Dorsolateral prefrontal cortex (tissue), 120 donors: ENCODE measurements at regions of chr2 and their contacts with region 1.

Region 1: DNA sequence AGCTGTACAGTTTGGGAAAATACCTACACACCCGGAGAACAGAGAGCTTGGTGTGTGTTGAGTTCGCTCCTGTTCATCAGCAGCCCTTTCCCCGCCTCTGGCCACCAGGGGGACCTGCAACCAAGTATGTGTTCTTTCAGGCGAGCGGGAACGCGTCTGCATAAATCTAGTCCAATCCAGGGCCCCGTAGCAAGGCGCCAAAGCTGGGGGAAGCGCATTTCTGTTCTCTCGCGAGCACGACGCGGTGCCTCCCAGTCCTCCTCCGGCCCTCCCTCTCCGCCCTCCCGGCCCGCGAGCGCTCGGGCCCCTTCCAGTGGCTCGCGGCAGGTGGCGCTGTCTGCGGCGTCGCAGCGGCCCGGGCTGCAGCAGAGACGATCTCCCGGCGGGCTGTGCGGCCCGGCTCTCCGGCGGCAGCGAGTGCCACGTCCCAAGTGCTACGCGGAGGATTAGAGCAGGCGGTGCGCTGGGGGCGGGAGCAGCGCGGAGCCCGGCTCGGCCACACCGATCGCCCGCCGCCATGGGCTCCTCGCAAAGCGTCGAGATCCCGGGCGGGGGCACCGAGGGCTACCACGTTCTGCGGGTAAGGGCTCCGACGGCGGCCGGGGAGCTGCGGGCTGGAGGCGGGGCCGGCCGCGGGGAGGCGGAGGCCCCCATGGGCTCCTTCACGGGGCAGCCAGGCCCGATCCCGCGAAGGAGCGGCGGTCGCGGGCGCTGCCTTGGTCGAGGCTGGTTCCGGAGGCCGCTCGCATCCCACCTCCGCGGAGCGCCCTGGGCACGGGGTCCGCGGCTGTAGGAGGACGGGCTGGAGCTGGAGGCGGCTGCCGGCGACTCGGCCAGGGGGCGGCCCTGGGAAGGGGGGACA is at the start of gene GORASP2:
- DNase-seq: peak; percentile 95 to 100 (median 98)
- H3K4me3 ChIP-seq: peak within 1 kb of the TSS; percentile 59 to 99 (median 92)
- H3K27ac ChIP-seq: peak within 1 kb of the TSS; percentile 46 to 97 (median 88)
- H3K27me3 ChIP-seq: no peaks in the 10 kb centered on the region
- CTCF ChIP-seq: peak in 55 of 56 donors; percentile 87 to 100 (median 97)
- total RNA-seq, gene GORASP2: 28.3 to 69.0 (median 51.0) TPM

Region 2: DNA sequence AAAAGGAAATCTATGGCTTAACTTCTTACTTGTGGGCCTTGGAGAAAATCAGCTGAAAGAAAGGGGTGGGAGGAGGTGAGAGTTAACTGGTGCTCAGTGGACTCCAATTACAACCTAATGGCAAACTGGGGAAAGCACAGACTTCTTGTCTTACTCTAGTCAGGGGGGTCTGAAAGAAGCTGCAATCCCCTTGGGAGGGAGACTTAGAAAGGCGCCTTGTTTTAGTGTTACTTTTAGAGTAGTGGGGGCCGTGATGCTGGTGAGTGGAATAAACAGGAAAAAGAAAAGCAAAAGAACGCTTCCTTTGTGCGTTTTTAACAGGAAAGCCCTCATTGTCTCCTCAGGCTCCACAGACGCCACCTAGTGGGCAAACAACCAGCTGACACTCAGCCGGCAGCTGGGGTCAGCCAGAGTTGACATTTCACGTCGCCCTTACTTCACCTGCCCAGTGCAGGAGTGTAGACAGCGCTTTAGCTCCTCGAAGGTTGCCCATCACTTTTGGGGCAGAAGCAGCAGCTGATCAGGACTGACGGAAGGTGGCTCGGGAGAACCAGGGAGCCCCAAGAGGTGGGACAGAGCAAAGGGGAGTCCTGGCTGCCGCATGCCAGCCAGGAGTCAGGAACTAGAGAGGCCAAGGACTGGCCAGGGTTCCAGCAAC is 55.9 kb before region 1 on chr2:
- intact Hi-C with region 1: no loop called
- DNase-seq: peak in 9 of 10 donors; percentile 23 to 71 (median 55)
- H3K4me3 ChIP-seq: peak overlapping the region in 51 of 59 donors; percentile 7 to 60 (median 35)
- H3K27ac ChIP-seq: peak overlapping the region in 2 of 59 donors; percentile 44 to 48
- H3K27me3 ChIP-seq: peaks cover 0 to 4% (median 0%) of the 10 kb centered on the region in 45 donors
- CTCF ChIP-seq: peak; percentile 58 to 89 (median 82)

Region 3: DNA sequence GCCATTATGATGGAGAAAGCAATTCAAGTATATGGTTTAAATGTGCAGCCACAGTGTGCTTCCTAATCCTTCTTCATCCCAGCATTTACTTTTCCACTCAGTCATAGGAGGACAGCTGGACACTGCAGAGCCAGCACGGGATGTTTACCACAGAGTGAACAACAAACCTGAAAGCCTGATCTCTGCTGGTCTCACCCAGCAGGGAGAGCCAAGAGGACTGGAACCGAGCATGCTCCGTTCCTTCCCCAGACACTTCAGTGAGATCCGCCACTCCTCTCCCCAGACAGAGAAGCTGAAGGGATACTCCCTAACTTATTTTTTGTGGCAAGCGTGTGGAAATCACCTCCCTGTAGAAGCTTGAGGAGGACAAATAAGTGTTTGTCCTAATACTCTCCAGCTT is 23.2 kb before region 1 on chr2:
- intact Hi-C with region 1: no loop called
- DNase-seq: no peak
- H3K4me3 ChIP-seq: no peak overlapping the region
- H3K27ac ChIP-seq: no peak overlapping the region
- H3K27me3 ChIP-seq: no peaks in the 10 kb centered on the region
- CTCF ChIP-seq: no peak

Region 4: DNA sequence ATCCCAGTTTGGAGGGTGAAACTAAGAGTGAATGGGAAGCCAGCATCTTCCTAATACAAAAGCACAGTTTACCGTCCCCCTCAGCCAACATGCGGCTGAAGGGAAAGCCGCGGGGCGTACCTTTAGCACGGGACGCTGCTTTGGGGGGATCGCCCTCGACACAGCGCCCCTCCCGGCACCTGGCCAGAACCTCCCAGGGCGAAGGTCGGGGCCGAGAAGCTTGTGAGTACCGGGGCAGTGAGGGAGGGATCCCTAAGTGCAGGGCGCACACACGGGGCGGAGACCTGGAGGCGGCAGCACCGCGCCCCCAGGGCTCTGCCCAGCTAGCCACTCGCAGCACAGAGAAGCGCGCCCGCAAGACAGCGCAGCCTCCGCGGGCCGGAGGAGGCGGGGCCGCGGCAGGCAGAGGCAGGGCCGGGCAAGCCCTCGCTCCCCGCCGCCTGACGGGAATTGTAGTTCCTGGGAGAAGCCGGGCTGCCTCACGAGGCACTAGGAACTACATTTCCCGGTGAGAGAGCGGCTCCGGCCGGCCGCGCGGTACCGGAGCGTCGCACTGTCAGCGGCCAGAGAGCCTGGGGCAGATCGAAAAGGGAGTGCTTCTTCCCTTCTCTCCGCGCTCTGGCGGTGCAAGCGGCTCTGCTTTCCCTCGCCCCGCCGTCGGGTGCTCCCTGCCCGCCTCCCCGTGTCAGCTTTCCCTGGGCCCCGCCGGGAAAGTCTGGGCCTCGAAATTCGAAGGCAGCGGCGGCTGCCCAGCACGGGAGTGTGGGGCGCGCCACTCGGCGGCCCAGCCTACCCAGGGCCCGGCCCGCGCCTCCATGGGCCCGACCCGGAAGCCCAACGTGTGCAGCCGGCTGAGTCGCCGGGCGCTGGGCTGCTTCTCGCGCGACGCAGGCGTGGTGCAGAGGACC is 505.0 kb after region 1 on chr2 and contains the starts of genes DCAF17 and METTL8:
- intact Hi-C with region 1: loop called (anchors 1 to 5 kb)
- DNase-seq: peak; percentile 91 to 98 (median 96)
- H3K4me3 ChIP-seq: peak within 1 kb of the TSS; percentile 67 to 99 (median 88)
- H3K27ac ChIP-seq: peak within 1 kb of the TSS; percentile 80 to 99 (median 96)
- H3K27me3 ChIP-seq: no peaks in the 10 kb centered on the region
- CTCF ChIP-seq: peak; percentile 18 to 81 (median 62)
- total RNA-seq, gene DCAF17: 15.9 to 42.0 (median 28.0) TPM
- total RNA-seq, gene METTL8: 14.3 to 33.4 (median 21.6) TPM

Region 5: GRCh38 chr2:171522052-171522787 is 593.2 kb after region 1 on chr2 and contains the start of gene CYBRD1:
- intact Hi-C with region 1: loop called in 1 of 2 experiments (anchors 2 kb)
- DNase-seq: peak; percentile 34 to 90 (median 81)
- H3K4me3 ChIP-seq: peak within 1 kb of the TSS; percentile 57 to 92 (median 77)
- H3K27ac ChIP-seq: peak within 1 kb of the TSS; percentile 3 to 97 (median 91)
- H3K27me3 ChIP-seq: peaks cover 0 to 18% (median 0%) of the 10 kb centered on the region in 45 donors
- CTCF ChIP-seq: peak in 19 of 56 donors; percentile 2 to 48 (median 20)
- total RNA-seq, gene CYBRD1: 14.0 to 100 (median 38.9) TPM